ENCODE measurements at regions of chr12 and their contacts with region 1.

Region 1: DNA sequence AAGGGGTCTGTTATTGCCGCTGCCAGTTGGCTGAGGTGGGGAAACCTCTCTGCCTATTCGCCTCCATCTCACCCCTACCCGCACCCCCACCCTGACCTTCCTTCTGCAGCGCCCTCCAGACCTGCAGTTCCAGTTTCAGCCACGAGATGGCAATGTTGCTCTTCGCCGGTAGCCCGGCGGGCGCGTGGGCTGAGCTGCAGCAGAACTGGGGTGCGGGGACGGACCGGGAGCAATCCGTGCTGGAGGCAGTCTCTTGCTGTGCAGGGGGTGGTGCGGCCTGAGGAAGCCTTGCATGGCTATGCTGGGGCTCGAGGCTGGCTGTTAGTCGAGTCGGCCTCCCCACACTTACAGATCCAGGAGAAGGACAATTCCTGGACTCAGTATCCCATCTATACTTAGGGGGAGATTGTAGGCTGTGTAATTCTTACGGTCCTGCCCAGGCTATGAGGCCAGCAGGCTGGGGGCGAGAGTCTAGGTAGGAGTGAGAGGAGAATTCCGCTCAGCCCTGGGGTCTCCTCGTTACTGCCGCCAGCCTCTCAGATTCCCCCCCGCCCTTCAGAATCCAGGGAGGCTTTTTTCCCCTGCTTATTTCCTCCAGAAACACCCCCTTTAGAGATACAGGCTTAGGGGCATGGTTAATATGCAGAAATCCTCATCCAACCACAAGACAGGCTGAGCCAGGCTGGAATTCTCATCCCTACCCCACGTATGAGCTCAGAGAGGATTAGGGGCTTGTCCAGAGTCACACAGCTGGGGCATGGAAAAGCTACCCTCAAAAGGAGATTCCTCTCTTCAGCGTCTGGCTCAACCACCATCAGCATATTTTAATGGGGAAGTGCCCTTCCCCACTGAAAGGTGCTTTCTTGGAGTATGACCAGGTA is 118.2 kb downstream of the AACS start:
- DNase-seq: peak; percentile 66
- ATAC-seq: peak; percentile 84
- H3K4me3 ChIP-seq: no peak overlapping the region
- H3K27ac ChIP-seq: no peak overlapping the region
- H3K4me1 ChIP-seq: no peaks in the 10 kb centered on the region
- H3K27me3 ChIP-seq: peaks cover 32% of the 10 kb centered on the region
- CTCF ChIP-seq: peak; percentile 97
- POLR2A ChIP-seq: peak; percentile 42; the same call in 1 of the 2 replicates
- RAD21 ChIP-seq: peak; percentile 97

Region 2: DNA sequence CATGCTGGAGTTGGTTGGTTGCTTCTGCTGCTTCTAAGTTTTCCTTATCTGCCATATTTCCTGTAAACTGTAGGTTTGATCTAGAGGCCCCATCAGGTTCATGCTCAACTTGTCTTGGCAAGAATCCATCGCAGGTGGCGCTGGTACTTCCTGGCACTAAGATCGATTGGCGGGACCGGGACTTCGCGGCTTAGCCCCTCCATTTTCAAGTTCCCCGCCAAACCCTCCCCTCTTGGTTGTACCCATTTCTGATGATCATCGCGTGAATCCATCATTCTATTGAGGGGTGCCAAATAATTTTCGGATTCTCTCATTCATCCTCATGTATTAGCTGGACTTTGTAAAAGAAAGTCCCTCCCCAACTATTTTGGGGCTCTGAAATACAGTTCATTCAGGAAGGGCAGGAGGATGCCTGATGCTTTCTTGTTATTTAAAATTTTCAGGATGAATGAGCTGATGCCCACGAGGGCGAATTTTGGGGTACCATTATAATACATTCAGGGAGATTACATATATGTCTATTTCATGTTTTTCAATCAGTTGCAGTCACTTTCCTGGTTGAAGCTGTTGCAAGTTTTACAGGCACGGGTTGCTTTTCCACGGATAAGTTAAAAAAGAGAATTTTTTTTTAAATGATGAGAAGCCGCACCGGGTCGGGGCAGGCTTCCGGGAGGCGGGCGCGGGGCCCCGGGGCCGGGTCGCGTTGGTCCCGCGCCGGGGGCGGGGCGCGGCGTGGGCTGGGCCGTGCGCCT is 190.4 kb before region 1 on chr12:
- CTCF ChIA-PET with region 1: no interaction called
- POLR2A ChIA-PET with region 1: no interaction called
- dilution Hi-C with region 1: no loop called
- in situ Hi-C with region 1: no loop called
- intact Hi-C with region 1: loop called (anchors 10 kb)
- DNase-seq: peak; percentile 24
- ATAC-seq: no peak; the same call in 1 of the 2 replicates
- H3K4me3 ChIP-seq: peak overlapping the region; percentile 77
- H3K27ac ChIP-seq: no peak overlapping the region
- H3K4me1 ChIP-seq: peaks cover 9% of the 10 kb centered on the region
- H3K27me3 ChIP-seq: no peaks in the 10 kb centered on the region
- CTCF ChIP-seq: no peak
- POLR2A ChIP-seq: no peak
- RAD21 ChIP-seq: no peak

Region 3: GRCh38 chr12:125402874-125403789 is 219.7 kb after region 1 on chr12:
- CTCF ChIA-PET with region 1: no interaction called
- POLR2A ChIA-PET with region 1: no interaction called
- dilution Hi-C with region 1: no loop called
- in situ Hi-C with region 1: loop called (anchors 25 kb)
- intact Hi-C with region 1: loop called (anchors 1 kb)
- DNase-seq: peak; percentile 6
- ATAC-seq: no peak
- H3K4me3 ChIP-seq: no peak overlapping the region
- H3K27ac ChIP-seq: no peak overlapping the region
- H3K4me1 ChIP-seq: no peaks in the 10 kb centered on the region
- H3K27me3 ChIP-seq: no peaks in the 10 kb centered on the region
- CTCF ChIP-seq: peak; percentile 47
- POLR2A ChIP-seq: no peak
- RAD21 ChIP-seq: peak; percentile 45

Measured in IMR-90 (cell line).